H1 (cell line): ENCODE measurements at regions of chr11 and their contacts with region 1.

Region 1: DNA sequence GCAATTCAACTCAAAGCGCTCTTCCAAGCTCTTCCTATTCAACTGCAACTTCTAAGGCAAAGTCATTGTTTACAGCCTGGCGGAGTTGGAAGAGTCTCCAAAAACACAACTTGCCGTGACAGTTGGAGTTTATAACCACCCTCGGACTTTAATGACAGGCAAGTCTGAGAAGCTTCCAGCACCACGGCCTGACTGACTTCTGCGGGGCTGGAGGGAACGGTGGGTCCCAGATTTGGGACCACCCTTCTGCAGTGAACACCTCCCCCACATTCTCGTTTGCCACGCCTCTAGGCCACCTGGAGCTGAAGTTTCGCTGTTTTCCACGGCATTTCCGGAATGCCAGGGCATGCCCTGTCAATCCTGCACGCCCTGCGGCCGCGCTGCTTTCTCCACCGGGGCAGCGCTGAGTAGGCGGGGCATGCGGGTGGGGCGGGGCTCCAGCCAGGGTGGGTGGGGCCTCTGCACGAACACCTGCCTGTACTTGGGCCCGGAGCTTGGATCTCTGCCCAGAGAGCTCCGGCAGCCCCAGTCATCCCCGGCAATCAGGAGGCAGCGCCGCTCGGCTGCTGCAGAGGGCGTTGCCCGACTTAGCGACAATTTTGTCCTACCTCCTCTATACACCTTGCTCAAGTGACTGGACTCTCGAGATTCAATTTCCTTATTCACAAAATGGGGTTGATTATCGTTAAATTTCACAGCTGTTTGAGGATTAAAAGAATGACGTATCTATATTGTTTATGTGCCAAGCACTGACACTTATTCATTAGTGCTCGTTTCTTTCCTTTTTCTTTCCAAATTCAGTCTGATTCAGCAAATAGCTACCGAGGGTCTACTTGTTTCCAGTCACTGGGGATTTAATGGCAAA is 48.7 kb upstream of the BIRC3 start:
- DNase-seq: peak; percentile 88 to 89
- H3K4me3 ChIP-seq: peak overlapping the region; percentile 28 to 65 (median 56); a peak in 7 of 8 replicates
- H3K27ac ChIP-seq: no peak overlapping the region
- H3K4me1 ChIP-seq: peaks cover 3 to 18% (median 8%) of the 10 kb centered on the region in 4 experiments; a peak in 6 of 7 replicates
- H3K27me3 ChIP-seq: no peaks in the 10 kb centered on the region; a peak in 1 of 7 replicates
- CTCF ChIP-seq: peak; percentile 74 to 77 (median 74)
- EP300 ChIP-seq: no peak
- POLR2A ChIP-seq: no peak
- RAD21 ChIP-seq: peak; percentile 75 to 80

Region 2: DNA sequence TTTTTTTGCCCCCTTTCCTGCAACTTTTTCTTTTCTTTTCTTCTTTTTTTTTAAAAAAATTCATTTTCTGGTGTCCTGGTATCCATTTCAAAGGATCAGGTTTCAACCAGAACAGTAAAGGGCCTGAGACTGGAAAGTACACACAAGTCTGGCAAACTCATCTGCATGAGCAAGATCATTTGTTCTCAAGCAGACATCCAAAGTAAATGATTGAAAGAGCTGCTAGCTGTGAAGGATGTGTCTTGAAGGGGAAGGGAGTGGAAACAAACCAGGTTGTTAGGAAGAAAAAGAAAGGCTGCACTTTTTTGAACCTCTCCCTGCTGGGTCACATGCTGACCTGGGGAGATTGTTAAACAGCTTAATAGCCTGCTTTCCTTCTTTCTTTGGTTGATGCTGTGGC is 153.0 kb before region 1 on chr11:
- CTCF ChIA-PET with region 1: interaction called, 13 read pairs
- POLR2A ChIA-PET with region 1: interaction called, 5 read pairs
- DNase-seq: peak in 1 of 2 experiments; percentile 41
- H3K4me3 ChIP-seq: peak overlapping the region in 1 of 4 experiments; percentile 29; a peak in 2 of 8 replicates
- H3K27ac ChIP-seq: no peak overlapping the region
- H3K4me1 ChIP-seq: peaks cover 0 to 44% (median 5%) of the 10 kb centered on the region in 4 experiments; a peak in 5 of 7 replicates
- H3K27me3 ChIP-seq: no peaks in the 10 kb centered on the region
- CTCF ChIP-seq: no peak
- EP300 ChIP-seq: no peak
- POLR2A ChIP-seq: no peak
- RAD21 ChIP-seq: no peak

Region 3: GRCh38 chr11:102244681-102245409 is 23.7 kb before region 1 on chr11:
- CTCF ChIA-PET with region 1: interaction called, 11 read pairs
- POLR2A ChIA-PET with region 1: no interaction called
- DNase-seq: no peak
- H3K4me3 ChIP-seq: no peak overlapping the region
- H3K27ac ChIP-seq: no peak overlapping the region
- H3K4me1 ChIP-seq: no peaks in the 10 kb centered on the region; a peak in 1 of 7 replicates
- H3K27me3 ChIP-seq: peaks cover 0 to 2% (median 0%) of the 10 kb centered on the region in 4 experiments; a peak in 1 of 7 replicates
- CTCF ChIP-seq: no peak
- EP300 ChIP-seq: no peak
- POLR2A ChIP-seq: no peak
- RAD21 ChIP-seq: no peak

Region 4: GRCh38 chr11:102279641-102280170 is 11.1 kb after region 1 on chr11:
- CTCF ChIA-PET with region 1: interaction called, 21 read pairs
- POLR2A ChIA-PET with region 1: interaction called, 9 read pairs
- DNase-seq: no peak
- H3K4me3 ChIP-seq: peak overlapping the region in 1 of 4 experiments; percentile 35; a peak in 2 of 8 replicates
- H3K27ac ChIP-seq: no peak overlapping the region
- H3K4me1 ChIP-seq: peaks cover 0 to 6% (median 2%) of the 10 kb centered on the region in 4 experiments; a peak in 2 of 7 replicates
- H3K27me3 ChIP-seq: no peaks in the 10 kb centered on the region
- CTCF ChIP-seq: peak in 1 of 3 experiments; percentile 11; a peak in 1 of 4 replicates
- EP300 ChIP-seq: no peak
- POLR2A ChIP-seq: no peak
- RAD21 ChIP-seq: no peak

Region 5: GRCh38 chr11:102309621-102310541 is 41.3 kb after region 1 on chr11:
- CTCF ChIA-PET with region 1: interaction called, 12 read pairs
- POLR2A ChIA-PET with region 1: no interaction called
- DNase-seq: peak; percentile 17 to 79
- H3K4me3 ChIP-seq: no peak overlapping the region
- H3K27ac ChIP-seq: no peak overlapping the region
- H3K4me1 ChIP-seq: no peaks in the 10 kb centered on the region; a peak in 1 of 7 replicates
- H3K27me3 ChIP-seq: no peaks in the 10 kb centered on the region
- CTCF ChIP-seq: peak; percentile 72 to 88 (median 80)
- EP300 ChIP-seq: no peak
- POLR2A ChIP-seq: no peak
- RAD21 ChIP-seq: peak; percentile 54 to 63

Region 6: DNA sequence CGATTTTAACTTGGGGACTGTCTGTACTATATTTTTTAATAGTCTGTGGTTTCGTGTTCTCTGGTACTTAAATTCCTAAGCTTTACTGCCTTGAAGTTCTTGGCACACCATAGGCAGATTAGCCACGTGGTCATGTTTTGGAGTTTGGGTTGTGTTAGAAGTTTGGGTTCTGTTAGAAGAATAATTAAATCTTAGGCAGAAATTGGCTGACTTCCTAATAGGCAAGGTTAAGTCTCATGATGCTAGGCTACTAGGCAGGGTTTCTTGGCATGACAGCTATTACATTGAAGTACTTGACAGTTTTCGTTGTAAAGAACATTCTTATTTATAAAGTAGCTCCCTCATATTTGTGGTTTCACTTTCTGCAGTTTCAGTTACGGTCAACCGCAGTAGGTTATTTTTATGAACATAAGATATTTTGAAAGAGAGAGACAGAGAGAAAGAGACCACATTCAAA is 292.0 kb after region 1 on chr11:
- CTCF ChIA-PET with region 1: no interaction called
- POLR2A ChIA-PET with region 1: no interaction called
- DNase-seq: no peak
- H3K4me3 ChIP-seq: no peak overlapping the region
- H3K27ac ChIP-seq: no peak overlapping the region
- H3K4me1 ChIP-seq: peaks cover 0 to 2% (median 0%) of the 10 kb centered on the region in 4 experiments; a peak in 1 of 7 replicates
- H3K27me3 ChIP-seq: no peaks in the 10 kb centered on the region
- CTCF ChIP-seq: no peak
- EP300 ChIP-seq: no peak
- POLR2A ChIP-seq: no peak
- RAD21 ChIP-seq: no peak

Region 7: GRCh38 chr11:102599642-102600261 is 331.2 kb after region 1 on chr11:
- CTCF ChIA-PET with region 1: no interaction called
- POLR2A ChIA-PET with region 1: no interaction called
- DNase-seq: no peak
- H3K4me3 ChIP-seq: no peak overlapping the region
- H3K27ac ChIP-seq: no peak overlapping the region
- H3K4me1 ChIP-seq: peaks cover 0 to 6% (median 1%) of the 10 kb centered on the region in 4 experiments; a peak in 2 of 7 replicates
- H3K27me3 ChIP-seq: no peaks in the 10 kb centered on the region
- CTCF ChIP-seq: no peak
- EP300 ChIP-seq: no peak
- POLR2A ChIP-seq: no peak
- RAD21 ChIP-seq: no peak